ENCODE measurements at regions of chr15 and their contacts with region 1.

Region 1: DNA sequence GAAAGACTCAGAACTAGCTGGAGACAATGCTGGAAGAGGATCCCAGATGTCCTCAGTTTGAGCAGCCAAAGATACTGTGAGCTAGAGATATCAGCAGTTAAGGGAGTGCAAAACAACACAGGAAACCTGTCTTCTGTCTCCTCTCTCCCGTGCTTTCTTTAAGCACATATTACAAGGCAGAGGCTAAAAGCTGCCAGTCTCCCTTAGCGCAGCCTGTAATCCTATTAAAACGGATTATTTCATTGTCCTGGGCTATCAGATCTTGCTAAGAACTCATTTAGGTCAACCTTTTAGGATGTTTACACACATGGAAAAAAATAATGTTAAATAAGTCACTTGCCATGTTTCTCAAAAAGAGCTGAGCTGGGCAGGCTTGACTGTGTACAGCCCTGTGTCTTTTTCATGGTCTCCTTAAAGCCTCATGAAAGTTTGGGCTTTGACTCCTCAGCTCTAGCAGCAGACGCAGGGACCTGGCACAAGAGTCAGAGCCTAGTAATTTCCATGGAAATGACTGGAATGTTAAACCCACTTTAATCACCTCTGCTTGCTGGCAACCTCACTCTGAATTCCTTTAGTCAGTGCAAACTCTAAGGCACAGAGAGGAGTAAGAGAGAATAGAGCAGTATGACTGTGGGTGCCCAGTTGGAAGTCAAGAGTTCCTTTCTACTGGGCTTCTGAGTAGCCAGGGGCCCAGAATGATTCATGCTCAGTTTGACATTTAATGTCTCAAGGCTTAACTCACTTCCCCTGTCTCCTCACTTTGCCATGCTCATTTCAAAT is 491.9 kb downstream of the NTRK3 start:
- DNase-seq: peak in 1 of 2 experiments; percentile 9
- H3K4me3 ChIP-seq: no peak overlapping the region
- H3K27ac ChIP-seq: no peak overlapping the region
- H3K4me1 ChIP-seq: peaks cover 0 to 9% (median 6%) of the 10 kb centered on the region in 4 experiments; a peak in 3 of 7 replicates
- H3K27me3 ChIP-seq: no peaks in the 10 kb centered on the region
- CTCF ChIP-seq: no peak
- EP300 ChIP-seq: no peak
- POLR2A ChIP-seq: no peak
- RAD21 ChIP-seq: no peak

Region 2: DNA sequence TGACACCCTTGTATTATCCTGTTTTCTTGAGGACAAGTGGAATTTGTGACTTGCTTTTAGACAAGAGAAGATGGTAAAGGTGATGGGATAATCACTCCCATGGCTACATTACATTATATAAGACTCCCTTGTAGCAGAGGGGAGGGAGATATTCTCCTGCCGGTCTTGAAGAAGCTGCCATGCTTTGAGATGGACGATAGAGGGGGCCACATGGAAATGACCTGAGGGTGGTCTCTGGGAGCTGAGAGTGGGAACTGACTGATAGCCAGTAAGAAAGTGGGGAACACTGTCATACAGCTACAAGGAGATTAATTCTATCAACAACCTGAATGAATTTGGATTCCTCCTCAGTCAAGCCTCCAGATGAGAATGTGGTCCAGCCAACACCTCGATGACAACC is 48.2 kb before region 1 on chr15:
- CTCF ChIA-PET with region 1: interaction called, 11 read pairs
- POLR2A ChIA-PET with region 1: no interaction called
- DNase-seq: no peak
- H3K4me3 ChIP-seq: no peak overlapping the region
- H3K27ac ChIP-seq: no peak overlapping the region
- H3K4me1 ChIP-seq: no peaks in the 10 kb centered on the region
- H3K27me3 ChIP-seq: no peaks in the 10 kb centered on the region
- CTCF ChIP-seq: peak; percentile 36 to 65 (median 49)
- EP300 ChIP-seq: no peak
- POLR2A ChIP-seq: no peak
- RAD21 ChIP-seq: peak; percentile 59 to 70

Region 3: GRCh38 chr15:87752250-87752951 is 12.2 kb before region 1 on chr15:
- CTCF ChIA-PET with region 1: interaction called, 13 read pairs
- POLR2A ChIA-PET with region 1: no interaction called
- DNase-seq: no peak
- H3K4me3 ChIP-seq: no peak overlapping the region
- H3K27ac ChIP-seq: no peak overlapping the region
- H3K4me1 ChIP-seq: no peaks in the 10 kb centered on the region
- H3K27me3 ChIP-seq: no peaks in the 10 kb centered on the region
- CTCF ChIP-seq: no peak
- EP300 ChIP-seq: no peak
- POLR2A ChIP-seq: no peak
- RAD21 ChIP-seq: no peak

Measured in H1 (cell line).